Activated naive CD4-positive, alpha-beta T cell treated with anti-CD3 and anti-CD28 coated beads for 36 hours (primary cell): ENCODE measurements at regions of chr9 and their contacts with region 1.

Region 1: DNA sequence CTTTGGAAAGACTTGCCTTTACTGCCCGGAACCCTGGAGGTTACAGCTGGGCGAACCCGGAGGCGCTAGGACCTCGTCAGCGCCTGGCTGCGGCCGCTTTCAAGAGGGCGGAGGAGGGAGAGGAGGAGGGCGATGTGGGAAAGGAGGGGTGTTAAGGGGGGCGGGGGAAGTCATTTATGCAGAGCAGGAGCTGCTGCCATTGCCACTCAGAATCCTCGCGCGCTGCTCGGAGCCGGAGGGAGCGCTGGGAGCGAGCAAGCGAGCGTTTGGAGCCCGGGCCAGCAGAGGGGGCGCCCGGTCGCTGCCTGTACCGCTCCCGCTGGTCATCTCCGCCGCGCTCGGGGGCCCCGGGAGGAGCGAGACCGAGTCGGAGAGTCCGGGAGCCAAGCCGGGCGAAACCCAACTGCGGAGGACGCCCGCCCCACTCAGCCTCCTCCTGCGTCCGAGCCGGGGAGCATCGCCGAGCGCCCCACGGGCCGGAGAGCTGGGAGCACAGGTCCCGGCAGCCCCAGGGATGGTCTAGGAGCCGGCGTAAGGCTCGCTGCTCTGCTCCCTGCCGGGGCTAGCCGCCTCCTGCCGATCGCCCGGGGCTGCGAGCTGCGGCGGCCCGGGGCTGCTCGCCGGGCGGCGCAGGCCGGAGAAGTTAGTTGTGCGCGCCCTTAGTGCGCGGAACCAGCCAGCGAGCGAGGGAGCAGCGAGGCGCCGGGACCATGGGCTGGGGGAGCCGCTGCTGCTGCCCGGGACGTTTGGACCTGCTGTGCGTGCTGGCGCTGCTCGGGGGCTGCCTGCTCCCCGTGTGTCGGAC is at the start of gene PCSK5:
- DNase-seq: peak; percentile 92
- H3K4me3 Mint-ChIP-seq: peak within 1 kb of the TSS; percentile 97
- H3K27ac Mint-ChIP-seq: peak within 1 kb of the TSS; percentile 66
- H3K4me1 Mint-ChIP-seq: peaks cover 33% of the 10 kb centered on the region
- H3K27me3 Mint-ChIP-seq: no peaks in the 10 kb centered on the region
- total RNA-seq, gene PCSK5: 5.7 to 6.0 TPM

Region 2: DNA sequence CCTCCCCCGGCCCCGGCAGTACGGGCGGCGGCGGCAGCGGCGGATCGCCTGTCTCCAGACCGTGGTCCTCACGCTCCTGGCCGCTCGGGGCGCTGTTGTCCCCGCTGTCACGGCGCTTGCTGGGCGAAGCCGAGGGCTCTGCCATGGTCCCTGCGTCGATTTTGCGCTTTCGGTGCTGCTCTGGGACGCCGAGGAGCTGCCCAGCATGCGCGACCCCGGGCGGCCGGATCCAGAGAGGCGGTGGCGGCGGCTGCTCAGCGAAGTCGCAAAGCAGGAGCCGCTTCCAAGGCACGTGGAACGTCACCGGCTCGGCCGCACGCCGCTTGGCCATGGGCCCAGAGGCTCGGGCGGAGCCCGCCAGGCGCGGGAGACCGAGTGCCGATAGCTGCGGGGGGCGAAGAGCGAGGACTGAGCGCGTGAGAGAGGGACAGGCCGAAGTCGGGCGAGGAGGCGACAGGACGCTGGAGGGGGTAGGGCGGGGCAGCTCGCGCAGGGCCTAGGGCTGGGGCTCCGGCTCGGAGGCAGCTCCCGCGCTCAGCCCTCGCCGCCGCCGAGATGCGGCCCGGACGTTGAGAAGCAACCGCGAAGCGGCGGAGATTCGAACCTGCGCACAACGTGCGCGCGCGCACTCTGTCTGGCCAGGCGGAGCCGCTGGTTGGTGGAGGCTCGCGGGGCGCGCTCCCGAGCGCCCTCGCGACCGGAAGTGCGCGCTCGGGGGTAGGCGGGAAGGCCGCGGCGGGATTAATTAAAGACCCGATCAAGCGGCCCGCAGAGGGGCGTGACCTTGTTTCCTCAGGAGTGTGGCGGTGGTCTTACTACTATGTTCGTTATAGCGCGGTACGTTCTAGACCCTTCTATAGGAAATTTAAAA is 938.2 kb before region 1 on chr9 and contains the start of gene C9orf40:
- CTCF ChIA-PET with region 1: no interaction called
- intact Hi-C with region 1: loop called (anchors 5 kb)
- DNase-seq: peak; percentile 92
- H3K4me3 Mint-ChIP-seq: peak within 1 kb of the TSS; percentile 95
- H3K27ac Mint-ChIP-seq: peak within 1 kb of the TSS; percentile 89
- H3K4me1 Mint-ChIP-seq: peaks cover 26% of the 10 kb centered on the region
- H3K27me3 Mint-ChIP-seq: no peaks in the 10 kb centered on the region
- total RNA-seq, gene C9orf40: 23.1 to 23.9 TPM

Region 3: GRCh38 chr9:75148561-75148960 is 742.1 kb before region 1 on chr9:
- CTCF ChIA-PET with region 1: no interaction called
- intact Hi-C with region 1: loop called (anchors 5 kb)
- DNase-seq: peak; percentile 32
- H3K4me3 Mint-ChIP-seq: no peak overlapping the region
- H3K27ac Mint-ChIP-seq: peak overlapping the region; percentile 83
- H3K4me1 Mint-ChIP-seq: peaks cover 64% of the 10 kb centered on the region
- H3K27me3 Mint-ChIP-seq: no peaks in the 10 kb centered on the region

Region 4: GRCh38 chr9:75993434-75993833 is 102.8 kb after region 1 on chr9:
- CTCF ChIA-PET with region 1: no interaction called
- intact Hi-C with region 1: loop called (anchors 5 kb)
- DNase-seq: no peak
- H3K4me3 Mint-ChIP-seq: no peak overlapping the region
- H3K27ac Mint-ChIP-seq: peak overlapping the region; percentile 59
- H3K4me1 Mint-ChIP-seq: peaks cover 68% of the 10 kb centered on the region
- H3K27me3 Mint-ChIP-seq: no peaks in the 10 kb centered on the region

Region 5: GRCh38 chr9:76116913-76117312 is 226.2 kb after region 1 on chr9:
- CTCF ChIA-PET with region 1: no interaction called
- intact Hi-C with region 1: loop called (anchors 2 kb)
- DNase-seq: peak; percentile 53
- H3K4me3 Mint-ChIP-seq: no peak overlapping the region
- H3K27ac Mint-ChIP-seq: peak overlapping the region; percentile 70
- H3K4me1 Mint-ChIP-seq: peaks cover 24% of the 10 kb centered on the region
- H3K27me3 Mint-ChIP-seq: no peaks in the 10 kb centered on the region

Region 6: DNA sequence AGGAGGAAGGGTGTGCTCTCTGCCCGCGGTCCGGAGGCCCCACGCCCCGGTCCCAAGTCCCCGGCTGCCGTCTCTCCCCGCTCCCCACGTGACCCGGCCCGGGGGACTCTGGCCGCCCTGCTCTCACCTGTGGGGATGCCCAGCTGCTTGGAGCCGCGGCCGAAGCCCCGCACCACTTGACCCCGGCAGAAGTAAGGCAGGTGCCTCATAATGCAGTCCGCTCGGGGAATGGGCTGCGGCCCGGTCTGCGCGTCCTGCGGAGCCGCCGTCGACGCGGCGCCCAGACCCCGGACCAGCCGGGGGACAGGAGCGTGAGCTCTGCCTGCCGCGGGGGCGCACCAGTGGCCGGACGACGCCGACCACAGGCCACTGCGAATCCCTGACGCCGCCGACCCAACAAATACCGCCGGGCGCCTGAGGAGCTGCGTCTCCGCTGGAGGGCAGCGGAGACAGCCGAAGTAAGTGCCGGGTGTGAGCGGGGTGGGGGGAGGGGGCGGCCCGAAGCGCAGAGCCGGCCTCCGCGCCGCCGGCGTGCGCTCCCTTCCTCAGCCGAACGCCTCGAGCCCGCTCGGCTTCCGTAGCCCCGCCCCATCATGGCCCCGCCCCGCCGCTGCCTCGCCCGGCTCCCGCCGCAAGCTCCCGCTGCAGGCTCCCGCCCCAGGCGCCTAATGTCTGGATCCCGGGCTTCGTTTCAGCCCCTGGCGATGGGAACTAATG is 503.4 kb after region 1 on chr9 and contains the start of gene RFK:
- CTCF ChIA-PET with region 1: no interaction called
- intact Hi-C with region 1: loop called (anchors 2 kb)
- DNase-seq: peak; percentile 94
- H3K4me3 Mint-ChIP-seq: peak within 1 kb of the TSS; percentile 96
- H3K27ac Mint-ChIP-seq: peak within 1 kb of the TSS; percentile 92
- H3K4me1 Mint-ChIP-seq: peaks cover 25% of the 10 kb centered on the region
- H3K27me3 Mint-ChIP-seq: no peaks in the 10 kb centered on the region
- total RNA-seq, gene RFK: 4.2 to 5.2 TPM